ENCODE measurements at regions of chr1 and their contacts with region 1.

Region 1: DNA sequence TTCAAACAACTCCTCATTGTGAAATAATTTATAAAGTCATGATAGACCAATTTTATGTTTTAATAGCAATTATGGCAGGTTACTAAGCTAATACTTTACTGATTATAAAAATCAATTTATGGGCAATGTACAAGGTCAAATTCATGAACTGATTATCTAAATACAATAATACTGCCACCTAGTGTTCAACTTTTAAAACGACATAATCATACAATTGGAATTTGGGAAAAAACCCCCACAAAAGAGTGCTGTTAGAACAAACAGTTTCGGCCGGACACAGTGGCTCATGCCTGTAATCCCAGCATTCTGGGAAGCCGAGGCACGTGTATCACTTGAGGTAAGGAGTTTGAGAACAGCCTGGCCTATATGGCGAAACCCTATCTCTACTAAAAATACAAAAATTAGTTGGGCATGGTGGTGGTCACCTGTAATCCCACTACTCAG is 14.0 kb downstream of the GTF2B start:
- DNase-seq: no peak
- H3K4me3 ChIP-seq: no peak overlapping the region
- CTCF ChIP-seq: peak; percentile 15

Region 2: GRCh38 chr1:88608139-88608943 is 269.1 kb before region 1 on chr1:
- CTCF ChIA-PET with region 1: interaction called, 11 read pairs
- POLR2A ChIA-PET with region 1: no interaction called
- DNase-seq: no peak
- H3K4me3 ChIP-seq: no peak overlapping the region
- CTCF ChIP-seq: peak; percentile 54

Region 3: GRCh38 chr1:88655685-88656299 is 221.6 kb before region 1 on chr1:
- CTCF ChIA-PET with region 1: interaction called, 155 read pairs
- POLR2A ChIA-PET with region 1: no interaction called
- DNase-seq: no peak
- H3K4me3 ChIP-seq: no peak overlapping the region
- CTCF ChIP-seq: peak; percentile 25

Region 4: DNA sequence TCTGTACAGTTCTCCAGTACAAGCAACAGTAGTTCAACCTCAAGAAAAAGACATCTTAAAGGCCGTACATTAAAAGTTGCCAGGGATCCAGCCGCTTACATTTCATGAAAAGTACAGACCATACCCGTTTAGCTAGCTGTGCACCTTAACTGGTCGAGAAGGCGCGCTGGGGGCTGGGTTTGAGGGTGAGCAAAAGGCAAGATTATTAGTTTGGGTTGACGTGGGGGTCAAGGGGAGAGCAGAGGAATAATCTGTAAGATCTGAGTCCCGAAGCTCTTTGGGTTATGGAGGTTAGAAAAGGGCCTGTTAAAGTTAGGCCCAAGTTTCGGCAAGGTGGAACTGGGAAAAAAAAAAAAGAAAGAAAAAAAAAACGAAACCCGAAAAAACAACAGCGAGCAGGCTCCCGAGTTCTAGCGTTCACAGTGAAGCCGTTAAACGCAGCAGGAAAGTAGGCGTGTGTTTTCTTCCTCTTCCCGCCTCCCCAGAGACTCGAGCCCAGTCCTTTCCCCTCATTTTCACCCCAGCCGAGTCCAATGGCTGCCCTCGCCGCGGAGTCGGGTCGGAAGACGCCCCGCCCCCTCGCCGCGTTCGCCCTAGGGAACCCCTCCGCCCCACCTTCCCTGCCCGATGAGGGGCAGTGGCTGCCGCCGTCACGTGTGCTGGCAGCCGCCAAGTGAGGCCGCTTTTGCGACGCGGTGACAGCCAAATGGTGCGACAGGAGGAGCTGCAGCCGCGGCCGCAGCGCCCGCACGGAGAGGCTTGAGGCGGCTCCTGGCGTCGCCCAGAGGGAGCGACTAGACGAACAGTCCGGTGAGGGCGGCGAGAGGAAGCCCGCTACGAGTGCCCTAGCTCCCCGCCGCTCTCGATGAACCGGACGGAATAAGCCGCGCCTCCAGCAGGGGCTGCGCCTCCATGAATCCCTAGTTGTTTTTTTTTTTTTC is 193.6 kb before region 1 on chr1 and contains the start of gene PKN2:
- CTCF ChIA-PET with region 1: interaction called, 17 read pairs
- POLR2A ChIA-PET with region 1: no interaction called
- DNase-seq: peak; percentile 87
- H3K4me3 ChIP-seq: peak within 1 kb of the TSS; percentile 79
- CTCF ChIP-seq: peak; percentile 35

Region 5: DNA sequence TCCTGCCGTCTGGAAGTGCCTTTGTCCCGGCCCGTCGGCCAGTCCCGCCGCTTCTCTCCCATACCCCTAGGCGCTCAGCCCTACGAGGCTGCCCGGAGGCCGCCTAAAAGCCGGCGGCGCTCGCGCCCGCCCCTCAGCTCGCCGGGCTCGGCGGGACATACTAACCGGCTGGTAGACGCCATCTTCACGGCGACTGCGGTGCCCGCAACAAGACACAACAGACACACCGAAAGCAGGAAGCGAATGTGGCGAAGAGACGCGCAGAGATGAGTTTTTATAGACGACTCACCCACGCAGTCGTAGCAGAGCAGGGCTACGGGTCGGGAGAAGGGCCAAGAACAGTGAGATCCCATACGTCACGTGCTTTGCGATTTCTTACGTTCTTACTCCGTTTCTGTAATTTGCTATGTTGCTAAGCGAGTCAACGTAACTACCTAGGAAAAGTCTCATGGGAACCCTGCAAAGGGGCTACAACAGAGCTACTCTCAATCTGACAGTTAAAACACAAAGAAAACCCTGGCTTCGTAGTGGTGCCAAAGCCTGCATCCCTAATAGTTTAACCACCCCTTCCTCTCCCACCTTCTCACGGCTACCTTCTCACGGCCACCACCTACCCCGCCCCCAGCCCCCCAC is 14.0 kb after region 1 on chr1 and contains the start of gene GTF2B:
- CTCF ChIA-PET with region 1: interaction called, 77 read pairs
- POLR2A ChIA-PET with region 1: interaction called, 4 read pairs
- DNase-seq: peak; percentile 79
- H3K4me3 ChIP-seq: peak within 1 kb of the TSS; percentile 89
- CTCF ChIP-seq: no peak